ENCODE measurements at regions of chr22 and their contacts with region 1.

Region 1: GRCh38 chr22:29154364-29155048 is 51.2 kb upstream of the EMID1 start:
- DNase-seq: peak; percentile 64 to 83
- ATAC-seq: peak; percentile 74 to 86 (median 76)
- H3K4me3 ChIP-seq: peak overlapping the region in 6 of 10 donors; percentile 14 to 31 (median 24)
- H3K27ac ChIP-seq: peak overlapping the region in 1 of 10 donors; percentile 90
- H3K4me1 ChIP-seq: peaks cover 0 to 53% (median 29%) of the 10 kb centered on the region in 9 donors
- H3K27me3 ChIP-seq: peaks cover 0 to 1% (median 0%) of the 10 kb centered on the region in 7 donors
- CTCF ChIP-seq: peak; percentile 88 to 98 (median 93)

Region 2: DNA sequence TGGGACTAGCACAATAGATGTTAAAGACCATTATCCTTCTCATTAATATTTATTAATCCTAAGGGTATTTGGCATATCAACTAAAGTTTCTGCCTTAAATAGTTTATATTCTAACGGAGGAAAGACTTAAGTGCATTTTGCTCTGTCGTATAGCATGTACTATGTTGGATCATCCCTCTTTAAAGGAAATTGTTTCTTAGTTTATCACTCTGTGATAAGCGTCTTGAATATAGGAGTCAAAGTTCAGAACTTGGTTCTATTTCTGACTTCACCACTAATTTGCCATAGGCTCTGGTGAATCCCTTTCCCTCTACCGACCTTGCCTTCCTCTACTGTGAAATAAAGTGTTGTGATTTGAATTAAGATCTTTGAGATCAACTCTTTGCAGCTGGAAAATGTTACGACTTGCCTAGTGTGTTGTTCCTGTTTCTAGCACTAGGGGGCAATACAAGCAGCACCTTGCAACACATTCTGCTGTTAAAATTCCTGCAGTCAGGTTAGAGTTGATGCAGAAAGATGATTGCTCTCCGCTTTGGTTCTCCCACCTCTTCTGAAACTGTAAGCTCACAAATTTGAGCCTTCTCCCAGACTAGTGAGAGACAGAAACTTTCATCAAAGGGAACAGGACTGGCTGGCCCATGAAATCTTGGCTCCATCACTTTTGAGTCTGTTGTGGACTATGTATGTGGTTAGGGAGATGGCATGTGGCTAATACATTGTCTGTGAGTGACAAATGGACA is 299.0 kb before region 1 on chr22:
- intact Hi-C with region 1: loop called in 3 of 10 experiments (anchors 5 to 10 kb)
- DNase-seq: peak in 1 of 2 donors; percentile 57
- ATAC-seq: peak in 7 of 8 donors; percentile 41 to 62 (median 54)
- H3K4me3 ChIP-seq: no peak overlapping the region
- H3K27ac ChIP-seq: no peak overlapping the region
- H3K4me1 ChIP-seq: peaks cover 0 to 7% (median 0%) of the 10 kb centered on the region in 9 donors
- H3K27me3 ChIP-seq: no peaks in the 10 kb centered on the region
- CTCF ChIP-seq: peak; percentile 84 to 94 (median 91)

Region 3: GRCh38 chr22:29040385-29041275 is 113.9 kb before region 1 on chr22:
- intact Hi-C with region 1: loop called in 1 of 10 experiments (anchors 10 kb)
- DNase-seq: peak; percentile 29 to 73
- ATAC-seq: peak; percentile 67 to 84 (median 76)
- H3K4me3 ChIP-seq: no peak overlapping the region
- H3K27ac ChIP-seq: peak overlapping the region in 1 of 10 donors; percentile 18
- H3K4me1 ChIP-seq: peaks cover 0 to 14% (median 4%) of the 10 kb centered on the region in 9 donors
- H3K27me3 ChIP-seq: no peaks in the 10 kb centered on the region
- CTCF ChIP-seq: peak; percentile 90 to 99 (median 97)

Region 4: DNA sequence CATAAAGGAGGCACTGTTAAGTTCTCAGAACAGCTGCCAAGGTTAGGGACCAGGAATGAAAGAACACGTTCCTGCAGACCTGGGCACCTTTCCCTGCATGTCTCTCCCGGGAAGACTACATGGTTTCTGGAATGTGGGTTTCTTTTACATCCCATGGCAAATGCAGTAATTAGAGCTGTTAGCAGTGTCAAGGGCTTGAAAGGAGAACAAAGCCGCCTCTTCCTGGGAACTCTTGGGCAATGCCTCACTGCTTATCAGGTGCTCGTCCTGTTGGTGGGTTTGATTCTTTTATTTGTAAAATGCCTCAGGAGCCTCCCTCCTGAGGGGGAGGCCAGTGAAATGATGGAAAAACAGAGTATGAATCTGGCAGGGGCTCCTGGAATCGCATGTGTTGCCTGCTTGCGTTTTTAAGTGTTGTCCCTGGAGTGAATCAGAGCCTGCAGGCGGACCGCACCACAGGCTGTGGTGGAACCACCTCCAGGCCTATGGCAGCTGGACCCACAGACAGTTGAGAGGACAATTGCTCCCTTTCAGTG is 92.2 kb before region 1 on chr22:
- intact Hi-C with region 1: loop called in 1 of 10 experiments (anchors 10 kb)
- DNase-seq: no peak
- ATAC-seq: peak in 3 of 8 donors; percentile 14 to 47 (median 35)
- H3K4me3 ChIP-seq: no peak overlapping the region
- H3K27ac ChIP-seq: no peak overlapping the region
- H3K4me1 ChIP-seq: no peaks in the 10 kb centered on the region
- H3K27me3 ChIP-seq: peaks cover 0 to 19% (median 0%) of the 10 kb centered on the region in 7 donors
- CTCF ChIP-seq: no peak

Region 5: DNA sequence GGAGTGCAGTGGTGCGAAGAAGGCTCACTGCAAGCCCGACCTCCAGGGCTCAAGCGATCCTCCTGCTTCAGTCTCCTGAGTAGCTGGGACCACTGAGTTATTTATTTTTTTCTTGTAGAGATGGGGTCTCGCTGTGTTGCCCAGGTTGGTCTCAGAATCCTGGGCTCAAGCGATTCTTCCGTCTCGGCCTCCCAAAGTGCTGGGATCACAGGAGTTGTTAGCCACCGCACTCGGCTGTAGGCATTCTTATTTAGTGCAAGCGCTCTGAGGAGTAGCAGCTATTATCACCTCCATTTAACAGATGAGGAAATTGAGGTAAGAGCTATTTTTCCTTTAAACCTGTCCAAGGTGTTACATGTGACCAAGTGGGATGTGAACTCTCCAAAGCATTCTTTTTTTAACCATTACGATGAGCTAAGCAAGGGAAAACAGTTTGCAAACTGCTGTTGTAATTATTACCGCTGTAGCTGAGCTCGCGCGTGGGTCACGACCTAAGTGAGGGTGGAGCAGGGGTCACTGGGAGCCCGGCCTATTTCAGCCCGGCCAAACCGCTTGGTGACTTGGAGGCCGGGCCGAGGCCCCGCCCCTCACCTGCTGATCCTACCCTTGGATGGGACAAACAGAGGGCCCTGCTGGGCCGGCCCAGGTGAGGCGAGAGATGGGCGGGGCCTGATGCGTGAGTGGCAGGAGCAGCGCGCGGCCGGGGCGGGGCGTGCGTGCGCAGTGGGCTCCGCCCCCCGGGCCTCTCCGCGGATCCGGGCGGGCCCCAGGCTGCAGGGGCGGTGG is 82.1 kb before region 1 on chr22:
- intact Hi-C with region 1: loop called in 6 of 10 experiments (anchors 5 to 10 kb)
- DNase-seq: peak; percentile 82 to 88
- ATAC-seq: peak; percentile 90 to 96 (median 92)
- H3K4me3 ChIP-seq: peak overlapping the region in 9 of 10 donors; percentile 41 to 86 (median 73)
- H3K27ac ChIP-seq: peak overlapping the region in 1 of 10 donors; percentile 21
- H3K4me1 ChIP-seq: peaks cover 4 to 45% (median 29%) of the 10 kb centered on the region in 9 donors
- H3K27me3 ChIP-seq: peaks cover 0 to 72% (median 0%) of the 10 kb centered on the region in 7 donors
- CTCF ChIP-seq: no peak

Region 6: GRCh38 chr22:29079218-29079901 is 75.1 kb before region 1 on chr22:
- intact Hi-C with region 1: loop called in 6 of 10 experiments (anchors 5 to 10 kb)
- DNase-seq: no peak
- ATAC-seq: peak in 2 of 8 donors; percentile 5 to 18
- H3K4me3 ChIP-seq: no peak overlapping the region
- H3K27ac ChIP-seq: peak overlapping the region in 6 of 10 donors; percentile 0 to 64 (median 40)
- H3K4me1 ChIP-seq: peaks cover 0 to 62% (median 44%) of the 10 kb centered on the region in 9 donors
- H3K27me3 ChIP-seq: peaks cover 0 to 20% (median 0%) of the 10 kb centered on the region in 7 donors
- CTCF ChIP-seq: no peak

Region 7: GRCh38 chr22:29245637-29246385 is 91.3 kb after region 1 on chr22:
- intact Hi-C with region 1: loop called in 5 of 10 experiments (anchors 1 to 10 kb)
- DNase-seq: peak; percentile 58 to 62
- ATAC-seq: peak; percentile 75 to 94 (median 92)
- H3K4me3 ChIP-seq: no peak overlapping the region
- H3K27ac ChIP-seq: no peak overlapping the region
- H3K4me1 ChIP-seq: peaks cover 0 to 7% (median 0%) of the 10 kb centered on the region in 9 donors
- H3K27me3 ChIP-seq: no peaks in the 10 kb centered on the region
- CTCF ChIP-seq: peak; percentile 94 to 98 (median 97)